Calu3 (cell line): ENCODE measurements at regions of chr10 and their contacts with region 1.

Region 1: GRCh38 chr10:81403451-81403850 is 471.5 kb upstream of the NRG3 start:
- DNase-seq: peak; percentile 63
- H3K4me3 Mint-ChIP-seq: peak overlapping the region; percentile 29
- H3K27ac Mint-ChIP-seq: peak overlapping the region; percentile 74
- H3K4me1 Mint-ChIP-seq: peaks cover 42% of the 10 kb centered on the region
- H3K27me3 Mint-ChIP-seq: no peaks in the 10 kb centered on the region
- CTCF ChIP-seq: no peak

Region 2: GRCh38 chr10:81116989-81117388 is 286.5 kb before region 1 on chr10:
- CTCF ChIA-PET with region 1: no interaction called
- intact Hi-C with region 1: loop called (anchors 10 kb)
- DNase-seq: peak; percentile 21
- H3K4me3 Mint-ChIP-seq: no peak overlapping the region
- H3K27ac Mint-ChIP-seq: no peak overlapping the region
- H3K4me1 Mint-ChIP-seq: peaks cover 11% of the 10 kb centered on the region
- H3K27me3 Mint-ChIP-seq: no peaks in the 10 kb centered on the region
- CTCF ChIP-seq: no peak

Region 3: GRCh38 chr10:81367132-81367531 is 36.3 kb before region 1 on chr10:
- CTCF ChIA-PET with region 1: no interaction called
- intact Hi-C with region 1: no loop called
- DNase-seq: no peak
- H3K4me3 Mint-ChIP-seq: no peak overlapping the region
- H3K27ac Mint-ChIP-seq: no peak overlapping the region
- H3K4me1 Mint-ChIP-seq: no peaks in the 10 kb centered on the region
- H3K27me3 Mint-ChIP-seq: no peaks in the 10 kb centered on the region
- CTCF ChIP-seq: no peak

Region 4: DNA sequence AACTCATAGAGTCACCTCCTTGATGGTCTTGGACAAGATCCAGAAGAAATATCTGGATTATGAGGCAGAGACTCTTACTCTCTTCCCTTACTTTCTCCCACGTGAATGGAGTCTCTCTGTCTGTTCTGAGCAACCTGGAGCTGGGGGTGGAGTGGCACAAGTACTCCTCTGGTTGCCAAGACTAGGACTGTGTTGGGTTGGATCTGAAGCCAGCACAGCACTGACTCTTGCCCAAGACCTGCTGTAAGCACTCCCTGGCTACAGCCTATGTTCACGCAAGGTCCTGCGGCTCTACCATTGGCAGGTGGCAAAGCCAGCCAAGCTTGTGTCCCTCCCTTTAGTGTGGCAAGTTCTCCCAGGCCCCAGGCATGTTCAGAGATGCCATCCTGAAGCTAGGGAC is 16.6 kb before region 1 on chr10:
- CTCF ChIA-PET with region 1: no interaction called
- intact Hi-C with region 1: no loop called
- DNase-seq: no peak
- H3K4me3 Mint-ChIP-seq: no peak overlapping the region
- H3K27ac Mint-ChIP-seq: no peak overlapping the region
- H3K4me1 Mint-ChIP-seq: no peaks in the 10 kb centered on the region
- H3K27me3 Mint-ChIP-seq: no peaks in the 10 kb centered on the region
- CTCF ChIP-seq: no peak